A673 (cell line): ENCODE measurements at regions of chr2 and their contacts with region 1.

Region 1: DNA sequence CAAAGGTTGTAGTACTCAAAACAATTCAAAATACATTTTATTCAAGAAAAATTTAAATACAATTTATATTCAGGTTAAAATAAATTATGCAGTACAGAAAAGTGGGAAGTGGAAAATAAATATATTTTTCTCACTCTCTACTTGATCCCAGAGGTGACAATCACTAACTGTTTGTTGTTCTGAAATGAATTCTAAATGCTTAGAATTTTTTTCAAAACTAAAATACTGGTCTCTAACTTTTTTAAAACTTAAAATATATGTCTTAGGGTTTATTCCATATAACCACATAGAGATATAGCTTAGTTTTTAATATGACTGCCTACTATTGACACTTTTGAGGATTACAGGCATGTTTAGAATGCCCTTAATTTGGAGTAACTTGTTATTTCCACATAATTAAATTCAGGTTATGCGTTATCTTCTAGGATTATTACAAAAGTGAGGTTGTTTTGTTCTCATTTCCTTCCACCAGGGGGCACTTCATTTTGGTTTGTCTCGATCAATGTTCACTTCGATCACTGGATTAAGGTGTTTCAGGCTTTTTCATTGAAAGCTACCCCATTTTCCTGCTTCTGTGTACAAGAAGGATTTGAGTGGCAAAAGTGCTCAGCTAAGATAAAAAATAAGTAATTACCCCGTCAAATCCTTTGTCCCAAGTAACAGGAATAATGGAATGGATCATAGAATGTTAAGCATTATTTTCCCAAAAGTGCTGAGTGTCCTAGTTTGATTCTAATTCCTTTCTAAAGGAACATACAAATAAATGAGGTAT is 27.1 kb upstream of the TFPI start:
- DNase-seq: peak; percentile 79
- H3K4me3 ChIP-seq: peak overlapping the region; percentile 28
- H3K27ac ChIP-seq: no peak overlapping the region
- H3K4me1 ChIP-seq: peaks cover 24% of the 10 kb centered on the region
- H3K27me3 ChIP-seq: no peaks in the 10 kb centered on the region
- CTCF ChIP-seq: peak; percentile 77

Region 2: GRCh38 chr2:186862869-186863709 is 718.2 kb before region 1 on chr2:
- CTCF ChIA-PET with region 1: interaction called, 3 read pairs
- POLR2A ChIA-PET with region 1: no interaction called
- intact Hi-C with region 1: loop called (anchors 5 kb)
- DNase-seq: peak; percentile 62
- H3K4me3 ChIP-seq: no peak overlapping the region
- H3K27ac ChIP-seq: no peak overlapping the region
- H3K4me1 ChIP-seq: no peaks in the 10 kb centered on the region
- H3K27me3 ChIP-seq: no peaks in the 10 kb centered on the region
- CTCF ChIP-seq: peak; percentile 79

Region 3: DNA sequence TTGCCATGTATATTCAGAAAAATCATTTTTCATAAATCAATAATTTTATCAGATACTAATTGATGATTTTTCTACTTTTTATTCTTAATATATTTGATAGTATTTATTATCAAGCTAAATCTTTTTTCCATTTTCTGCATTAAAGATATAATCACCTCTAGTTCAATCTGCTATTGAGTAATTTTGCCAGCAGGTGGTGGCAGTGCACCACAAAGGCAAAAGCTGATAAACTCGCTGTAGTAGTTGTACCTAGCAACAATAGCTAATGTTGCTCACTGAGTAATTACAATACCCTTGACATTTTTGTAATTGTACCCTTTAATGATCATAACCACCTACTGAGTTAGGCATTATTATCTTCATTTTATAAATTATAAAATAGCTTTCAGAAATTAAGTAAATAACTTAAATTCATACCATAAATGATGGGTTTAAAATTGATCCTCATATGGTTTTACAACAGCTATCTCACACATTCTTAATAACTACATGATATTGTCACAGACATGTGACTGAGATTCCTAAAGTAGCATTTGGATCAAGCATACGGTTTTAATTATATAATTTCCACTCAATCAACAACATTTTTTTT is 81.3 kb before region 1 on chr2:
- CTCF ChIA-PET with region 1: interaction called, 46 read pairs
- POLR2A ChIA-PET with region 1: no interaction called
- intact Hi-C with region 1: loop called (anchors 1 kb)
- DNase-seq: peak; percentile 80
- H3K4me3 ChIP-seq: no peak overlapping the region
- H3K27ac ChIP-seq: no peak overlapping the region
- H3K4me1 ChIP-seq: peaks cover 47% of the 10 kb centered on the region
- H3K27me3 ChIP-seq: no peaks in the 10 kb centered on the region
- CTCF ChIP-seq: peak; percentile 85

Region 4: GRCh38 chr2:188369365-188369764 is 788.1 kb after region 1 on chr2:
- CTCF ChIA-PET with region 1: no interaction called
- POLR2A ChIA-PET with region 1: no interaction called
- intact Hi-C with region 1: loop called (anchors 5 kb)
- DNase-seq: peak; percentile 78
- H3K4me3 ChIP-seq: no peak overlapping the region
- H3K27ac ChIP-seq: no peak overlapping the region
- H3K4me1 ChIP-seq: peaks cover 3% of the 10 kb centered on the region
- H3K27me3 ChIP-seq: no peaks in the 10 kb centered on the region
- CTCF ChIP-seq: peak; percentile 87

Region 5: GRCh38 chr2:188512456-188512855 is 931.1 kb after region 1 on chr2:
- CTCF ChIA-PET with region 1: no interaction called
- POLR2A ChIA-PET with region 1: no interaction called
- intact Hi-C with region 1: loop called (anchors 1 kb)
- DNase-seq: peak; percentile 78
- H3K4me3 ChIP-seq: no peak overlapping the region
- H3K27ac ChIP-seq: no peak overlapping the region
- H3K4me1 ChIP-seq: peaks cover 8% of the 10 kb centered on the region
- H3K27me3 ChIP-seq: no peaks in the 10 kb centered on the region
- CTCF ChIP-seq: peak; percentile 71